ENCODE measurements at regions of chr2 and their contacts with region 1.

Region 1: DNA sequence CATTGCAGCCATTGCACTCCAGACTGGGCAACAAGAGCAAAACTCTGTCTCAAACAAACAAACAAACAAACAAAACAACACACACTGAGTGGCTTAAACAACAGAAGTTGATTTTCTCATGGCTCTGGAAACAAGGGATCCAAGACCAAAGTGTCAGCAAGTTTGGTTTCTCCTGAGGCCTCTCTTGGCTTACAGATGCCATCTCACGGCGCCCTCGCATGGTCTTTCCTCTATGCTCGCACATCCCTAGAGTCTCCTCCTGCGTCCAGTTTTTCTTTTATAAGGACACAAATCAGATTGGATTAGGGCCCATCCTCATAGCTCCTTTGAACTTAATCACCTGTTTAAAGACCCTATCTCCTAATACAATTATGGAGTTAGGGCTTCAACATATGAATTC is 133.4 kb upstream of the LRRTM1 start:
- DNase-seq: no peak
- ATAC-seq: no peak
- H3K4me3 ChIP-seq: no peak overlapping the region
- H3K27ac ChIP-seq: no peak overlapping the region
- H3K4me1 ChIP-seq: no peaks in the 10 kb centered on the region
- H3K27me3 ChIP-seq: no peaks in the 10 kb centered on the region
- CTCF ChIP-seq: no peak
- EP300 ChIP-seq: no peak
- POLR2A ChIP-seq: no peak
- RAD21 ChIP-seq: no peak

Region 2: DNA sequence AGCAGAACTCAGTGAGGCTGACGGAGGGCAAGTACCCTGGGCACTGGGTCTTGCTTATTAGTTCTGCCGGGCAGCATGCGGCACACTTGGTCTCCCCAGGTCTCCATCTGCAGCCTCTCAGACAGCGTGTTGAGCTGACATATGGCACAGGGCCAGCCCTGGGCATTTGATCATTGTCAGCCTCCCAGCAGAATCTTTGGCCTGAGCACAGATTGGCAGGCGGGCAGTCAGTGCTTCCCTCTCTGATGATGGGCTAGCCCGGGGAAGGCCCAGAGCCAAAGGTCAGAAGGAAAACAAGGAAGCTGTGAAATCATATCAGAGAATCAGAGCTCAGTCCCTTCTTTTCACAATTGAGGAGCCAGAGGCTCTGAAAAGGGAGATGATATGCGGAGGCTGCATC is 16.7 kb after region 1 on chr2:
- CTCF ChIA-PET with region 1: interaction called, 19 read pairs
- POLR2A ChIA-PET with region 1: interaction called, 5 read pairs
- RAD21 ChIA-PET with region 1: interaction called, 8 read pairs
- SMC1A ChIA-PET with region 1: interaction called, 10 read pairs
- in situ Hi-C with region 1: no loop called
- intact Hi-C with region 1: no loop called
- DNase-seq: no peak
- ATAC-seq: peak; percentile 41
- H3K4me3 ChIP-seq: no peak overlapping the region
- H3K27ac ChIP-seq: no peak overlapping the region
- H3K4me1 ChIP-seq: 0 out of 2 replicates have a peak, but pooled peaks cover 1% of the 10 kb centered on the region
- H3K27me3 ChIP-seq: no peaks in the 10 kb centered on the region; a peak in 1 of 4 replicates
- CTCF ChIP-seq: no peak
- EP300 ChIP-seq: no peak
- POLR2A ChIP-seq: no peak
- RAD21 ChIP-seq: no peak

Measured in GM12878 (cell line).